ENCODE measurements at regions of chr11 and their contacts with region 1.

Region 1: DNA sequence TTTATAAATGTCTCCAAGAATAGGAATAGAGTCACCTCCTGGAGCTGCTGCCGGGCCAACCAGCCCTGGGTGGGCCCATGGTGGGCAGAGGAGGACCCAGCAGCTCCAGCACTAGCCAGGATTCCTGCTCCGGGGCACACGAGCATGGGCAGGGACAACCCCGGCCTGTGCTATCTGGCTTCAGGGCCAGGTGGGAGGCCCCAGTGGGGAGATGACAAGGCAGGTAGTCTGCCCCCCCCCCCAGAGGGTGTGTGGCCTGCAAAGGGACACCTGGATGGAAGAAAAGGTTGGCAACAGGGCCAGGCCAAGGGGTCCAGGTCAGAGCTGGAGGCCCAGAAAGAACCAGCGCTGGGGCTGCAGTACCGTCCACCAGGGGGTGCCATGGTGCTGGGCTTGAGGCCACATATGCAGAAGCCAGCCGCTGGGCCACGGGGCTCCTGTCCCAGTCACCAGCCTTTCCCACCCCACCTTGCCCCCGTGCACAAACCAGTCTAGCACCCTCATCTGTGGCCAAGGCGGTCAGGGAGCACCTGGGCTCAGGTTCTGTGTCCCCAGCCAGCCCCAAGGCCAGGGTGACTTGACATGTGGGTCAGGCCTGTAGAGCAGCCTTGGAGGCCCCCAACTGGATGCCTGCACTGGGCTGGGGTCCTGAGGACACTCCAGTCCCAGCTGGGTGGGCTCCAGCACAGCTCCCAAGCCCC is 3.5 kb downstream of the TSPAN32 start:
- DNase-seq: peak; percentile 71
- H3K4me3 Mint-ChIP-seq: peak overlapping the region; percentile 96
- H3K27ac Mint-ChIP-seq: peak overlapping the region; percentile 96
- H3K4me1 Mint-ChIP-seq: peaks cover 47% of the 10 kb centered on the region
- H3K27me3 Mint-ChIP-seq: no peaks in the 10 kb centered on the region

Region 2: DNA sequence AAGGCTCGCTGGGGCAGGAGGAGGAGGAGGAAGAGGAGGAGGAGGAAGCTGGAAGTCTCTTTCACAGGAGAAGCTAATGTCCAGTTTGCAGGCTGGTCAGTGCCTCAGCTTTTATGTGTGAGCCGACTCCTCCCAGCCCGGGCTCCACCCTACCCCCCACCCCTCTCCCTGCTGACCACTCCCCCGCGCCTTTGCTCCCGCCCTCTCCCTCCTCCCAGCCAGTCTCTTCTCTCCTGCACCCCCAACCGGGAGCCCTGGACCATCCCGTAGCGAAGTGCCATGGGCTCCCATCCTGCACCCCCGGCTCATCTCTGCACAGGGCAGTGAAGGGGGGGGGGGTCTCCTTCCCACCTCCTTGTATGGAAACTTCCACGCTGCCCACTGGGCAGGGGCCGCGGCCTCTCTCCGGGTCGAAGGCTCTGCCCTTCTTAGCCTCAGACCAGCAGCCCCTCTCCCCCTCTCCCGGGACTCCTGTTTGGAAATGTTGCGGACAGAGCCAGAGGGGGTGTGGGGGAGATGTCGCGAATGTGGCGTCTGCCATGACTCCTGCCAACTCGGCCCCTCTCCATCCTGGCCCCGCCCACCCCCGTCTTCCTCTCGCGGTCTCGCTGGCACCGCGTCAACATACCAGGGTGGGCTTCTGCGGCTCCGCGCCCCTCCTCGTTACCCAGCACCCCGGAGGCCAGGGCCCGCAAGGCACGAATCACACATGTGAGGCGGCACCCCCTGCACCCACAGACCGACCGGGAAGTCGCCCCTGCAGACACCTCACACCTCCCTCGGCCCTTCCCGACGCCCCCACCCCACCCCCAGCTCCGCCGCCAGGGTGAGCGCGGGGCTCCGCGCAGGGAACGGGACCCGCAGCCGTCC is 167.9 kb before region 1 on chr11:
- CTCF ChIA-PET with region 1: no interaction called
- POLR2A ChIA-PET with region 1: no interaction called
- DNase-seq: no peak
- H3K4me3 Mint-ChIP-seq: no peak overlapping the region
- H3K27ac Mint-ChIP-seq: no peak overlapping the region
- H3K4me1 Mint-ChIP-seq: peaks cover 2% of the 10 kb centered on the region
- H3K27me3 Mint-ChIP-seq: peaks cover 51% of the 10 kb centered on the region

Region 3: GRCh38 chr11:2196970-2197770 is 108.1 kb before region 1 on chr11:
- CTCF ChIA-PET with region 1: interaction called, 18 read pairs
- POLR2A ChIA-PET with region 1: no interaction called
- DNase-seq: peak; percentile 80
- H3K4me3 Mint-ChIP-seq: no peak overlapping the region
- H3K27ac Mint-ChIP-seq: no peak overlapping the region
- H3K4me1 Mint-ChIP-seq: peaks cover 4% of the 10 kb centered on the region
- H3K27me3 Mint-ChIP-seq: peaks cover 8% of the 10 kb centered on the region

Region 4: GRCh38 chr11:2256923-2257716 is 48.2 kb before region 1 on chr11:
- CTCF ChIA-PET with region 1: no interaction called
- POLR2A ChIA-PET with region 1: no interaction called
- DNase-seq: no peak
- H3K4me3 Mint-ChIP-seq: no peak overlapping the region
- H3K27ac Mint-ChIP-seq: no peak overlapping the region
- H3K4me1 Mint-ChIP-seq: no peaks in the 10 kb centered on the region
- H3K27me3 Mint-ChIP-seq: peaks cover 4% of the 10 kb centered on the region

Region 5: DNA sequence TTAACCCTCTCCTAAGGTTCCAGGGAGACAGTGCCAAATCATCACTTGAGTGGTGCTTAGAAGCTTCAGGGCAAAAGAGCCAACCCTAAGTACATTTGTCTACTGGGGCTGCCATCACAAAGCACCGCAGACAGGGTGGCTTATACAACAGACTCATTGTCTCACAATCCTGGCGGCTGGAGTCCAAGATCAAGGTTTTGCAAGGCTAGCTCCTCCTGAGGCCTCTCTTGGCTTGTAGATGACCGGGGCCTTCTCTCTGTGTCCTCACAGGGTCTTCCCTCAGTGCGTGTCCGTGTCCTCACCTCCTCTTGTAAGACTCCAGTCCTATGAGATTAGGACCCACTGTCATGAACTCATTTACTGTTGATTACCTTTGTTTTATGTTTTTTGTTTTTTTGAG is 37.7 kb after region 1 on chr11:
- CTCF ChIA-PET with region 1: no interaction called
- POLR2A ChIA-PET with region 1: no interaction called
- DNase-seq: no peak
- H3K4me3 Mint-ChIP-seq: no peak overlapping the region
- H3K27ac Mint-ChIP-seq: no peak overlapping the region
- H3K4me1 Mint-ChIP-seq: no peaks in the 10 kb centered on the region
- H3K27me3 Mint-ChIP-seq: peaks cover 11% of the 10 kb centered on the region